Activated B cell treated with CpG ODN at 0.5 μM for 24 hours (primary cell): ENCODE measurements at regions of chr10 and their contacts with region 1.

Region 1: GRCh38 chr10:19702215-19702614 is 114.0 kb upstream of the PLXDC2 start:
- DNase-seq: no peak
- ATAC-seq: no peak
- H3K4me3 Mint-ChIP-seq: no peak overlapping the region
- H3K27ac Mint-ChIP-seq: no peak overlapping the region
- H3K4me1 Mint-ChIP-seq: no peaks in the 10 kb centered on the region
- H3K27me3 Mint-ChIP-seq: no peaks in the 10 kb centered on the region
- CTCF ChIP-seq: no peak

Region 2: GRCh38 chr10:19505320-19506312 is 196.6 kb before region 1 on chr10:
- CTCF ChIA-PET with region 1: no interaction called
- POLR2A ChIA-PET with region 1: interaction called, 10 read pairs
- intact Hi-C with region 1: no loop called
- DNase-seq: no peak
- ATAC-seq: no peak
- H3K4me3 Mint-ChIP-seq: no peak overlapping the region
- H3K27ac Mint-ChIP-seq: no peak overlapping the region
- H3K4me1 Mint-ChIP-seq: no peaks in the 10 kb centered on the region
- H3K27me3 Mint-ChIP-seq: no peaks in the 10 kb centered on the region
- CTCF ChIP-seq: no peak